Endothelial cell of umbilical vein (primary cell): ENCODE measurements at regions of chr15 and their contacts with region 1.

Region 1: DNA sequence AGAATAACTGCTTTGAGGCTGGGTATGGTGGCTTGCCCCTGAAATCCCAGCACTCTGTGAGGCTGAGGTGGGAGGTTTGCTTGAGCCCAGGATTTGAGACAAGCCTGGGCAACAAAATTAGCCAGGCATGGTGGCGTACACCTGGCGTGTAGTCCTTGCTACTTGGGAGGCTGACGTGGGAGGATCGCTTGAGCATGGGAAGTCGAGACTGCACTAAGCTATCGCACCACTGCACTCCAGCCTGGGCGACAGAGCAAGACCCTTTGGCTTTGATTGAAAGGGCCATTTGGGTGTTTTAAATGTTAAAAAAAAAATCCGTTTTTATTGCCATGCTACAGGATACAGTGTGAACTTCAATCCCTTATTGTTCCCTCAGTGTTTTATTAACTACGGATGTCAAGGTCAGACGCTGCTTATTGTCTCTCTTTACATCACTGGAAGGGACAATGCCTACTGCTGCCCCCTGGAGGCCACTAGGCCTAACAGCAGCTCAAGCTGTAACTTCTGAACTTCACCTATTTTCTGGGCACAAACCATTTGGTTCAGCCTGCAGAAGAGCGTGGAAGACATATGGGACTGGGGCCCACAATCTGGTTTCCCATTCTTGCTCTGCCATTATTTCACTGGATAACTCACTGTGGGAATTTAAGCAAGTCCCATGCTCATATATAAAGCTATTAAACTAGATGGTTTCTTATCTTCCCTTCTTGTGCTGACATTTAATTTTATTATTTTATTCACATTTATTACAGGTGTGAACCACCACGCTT is 15.3 kb upstream of the IREB2 start:
- DNase-seq: peak; percentile 71
- H3K4me3 ChIP-seq: no peak overlapping the region
- H3K27ac ChIP-seq: no peak overlapping the region
- H3K4me1 ChIP-seq: no peaks in the 10 kb centered on the region
- H3K27me3 ChIP-seq: peaks cover 9% of the 10 kb centered on the region in 2 experiments
- CTCF ChIP-seq: peak; percentile 91
- POLR2A ChIP-seq: no peak

Region 2: GRCh38 chr15:78405336-78405924 is 17.3 kb before region 1 on chr15:
- CTCF ChIA-PET with region 1: interaction called, 26 read pairs
- POLR2A ChIA-PET with region 1: no interaction called
- dilution Hi-C with region 1: no loop called
- intact Hi-C with region 1: no loop called
- DNase-seq: no peak
- H3K4me3 ChIP-seq: no peak overlapping the region
- H3K27ac ChIP-seq: no peak overlapping the region
- H3K4me1 ChIP-seq: peaks cover under 1% of the 10 kb centered on the region
- H3K27me3 ChIP-seq: peaks cover 9 to 18% of the 10 kb centered on the region in 2 experiments
- CTCF ChIP-seq: no peak
- POLR2A ChIP-seq: no peak

Region 3: DNA sequence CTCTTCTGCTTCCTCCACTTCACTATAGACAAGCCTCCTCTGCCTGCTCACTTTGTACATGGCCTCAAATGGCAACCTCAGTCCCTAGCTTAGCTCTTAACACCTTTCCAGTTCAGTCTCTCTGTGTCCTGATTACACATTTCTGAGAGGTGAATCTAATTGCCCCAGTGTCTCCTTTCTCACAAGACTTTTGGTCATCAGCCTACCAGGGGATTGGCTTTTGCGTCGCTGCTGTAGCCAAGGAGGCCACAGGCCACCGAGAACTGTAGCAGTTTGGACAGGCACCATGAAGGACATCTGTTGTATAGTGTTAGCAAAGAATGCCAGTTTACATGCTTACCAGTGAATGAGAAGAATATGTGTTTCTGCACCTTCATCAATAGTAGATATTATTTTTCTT is 23.8 kb after region 1 on chr15:
- CTCF ChIA-PET with region 1: no interaction called
- POLR2A ChIA-PET with region 1: no interaction called
- dilution Hi-C with region 1: no loop called
- intact Hi-C with region 1: no loop called
- DNase-seq: no peak
- H3K4me3 ChIP-seq: no peak overlapping the region
- H3K27ac ChIP-seq: no peak overlapping the region
- H3K4me1 ChIP-seq: no peaks in the 10 kb centered on the region
- H3K27me3 ChIP-seq: no peaks in the 10 kb centered on the region
- CTCF ChIP-seq: no peak
- POLR2A ChIP-seq: no peak

Region 4: DNA sequence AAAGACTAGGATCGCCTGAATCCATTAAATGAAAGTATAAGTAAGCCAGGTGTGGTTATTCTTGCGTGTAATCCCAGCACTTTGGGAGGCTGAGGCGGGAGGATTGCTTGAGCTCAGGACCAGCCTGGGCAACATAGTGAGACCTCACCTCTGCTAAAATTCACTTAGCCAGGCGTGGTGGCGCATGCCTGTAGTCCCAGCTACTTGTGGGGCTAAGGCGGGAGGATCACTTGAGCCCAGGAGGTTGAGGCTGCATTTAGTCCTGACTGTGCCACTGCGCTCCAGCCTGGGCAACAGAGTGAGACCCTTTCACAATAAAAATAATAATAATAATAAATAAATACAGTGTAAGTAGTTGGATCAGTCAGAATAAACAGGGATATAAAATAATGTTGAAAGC is 59.2 kb after region 1 on chr15:
- CTCF ChIA-PET with region 1: no interaction called
- POLR2A ChIA-PET with region 1: interaction called, 3 read pairs
- dilution Hi-C with region 1: no loop called
- intact Hi-C with region 1: loop called (anchors 2 kb)
- DNase-seq: no peak
- H3K4me3 ChIP-seq: no peak overlapping the region
- H3K27ac ChIP-seq: no peak overlapping the region
- H3K4me1 ChIP-seq: no peaks in the 10 kb centered on the region
- H3K27me3 ChIP-seq: no peaks in the 10 kb centered on the region
- CTCF ChIP-seq: no peak
- POLR2A ChIP-seq: no peak